PC-3 (cell line): ENCODE measurements at regions of chr3 and their contacts with region 1.

Region 1: DNA sequence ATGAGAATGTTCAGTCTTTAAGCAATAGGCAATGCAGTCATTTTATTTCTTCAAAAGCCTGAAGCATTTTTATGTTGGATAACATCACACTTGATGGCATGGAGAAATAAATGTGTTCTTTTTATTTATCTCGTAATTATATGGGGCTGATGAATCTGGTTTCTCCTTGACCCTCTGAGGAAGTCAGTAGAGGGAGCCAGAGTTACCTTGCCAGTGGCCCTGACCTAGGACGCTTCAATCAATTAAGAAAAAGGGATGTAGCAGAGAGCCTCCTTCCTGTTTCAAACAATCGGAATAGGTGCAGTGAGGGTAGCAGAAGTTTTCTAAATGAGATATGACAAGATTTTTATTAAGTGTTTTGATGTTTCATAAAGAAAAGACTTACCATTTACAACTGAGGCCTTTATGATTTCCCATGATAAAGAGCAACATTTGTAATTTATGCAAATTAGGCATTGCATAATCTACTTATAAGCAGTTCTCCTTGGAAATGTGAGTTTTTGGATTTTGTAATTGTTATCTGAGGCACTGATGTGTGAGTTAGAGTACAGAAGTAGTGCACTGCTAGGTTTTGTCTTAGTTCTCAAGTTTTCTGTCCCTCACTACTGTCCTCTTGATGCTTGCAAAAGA is 129.1 kb downstream of the RAP2B start:
- DNase-seq: peak; percentile 69
- ATAC-seq: peak; percentile 80
- H3K4me3 ChIP-seq: no peak overlapping the region
- H3K27ac ChIP-seq: no peak overlapping the region
- H3K4me1 ChIP-seq: peaks cover 33% of the 10 kb centered on the region
- H3K27me3 ChIP-seq: no peaks in the 10 kb centered on the region
- CTCF ChIP-seq: peak; percentile 85

Region 2: GRCh38 chr3:153103406-153103945 is 187.7 kb before region 1 on chr3:
- CTCF ChIA-PET with region 1: no interaction called
- POLR2A ChIA-PET with region 1: interaction called, 11 read pairs
- intact Hi-C with region 1: no loop called
- DNase-seq: no peak
- ATAC-seq: no peak
- H3K4me3 ChIP-seq: no peak overlapping the region
- H3K27ac ChIP-seq: no peak overlapping the region
- H3K4me1 ChIP-seq: no peaks in the 10 kb centered on the region
- H3K27me3 ChIP-seq: no peaks in the 10 kb centered on the region
- CTCF ChIP-seq: no peak

Region 3: DNA sequence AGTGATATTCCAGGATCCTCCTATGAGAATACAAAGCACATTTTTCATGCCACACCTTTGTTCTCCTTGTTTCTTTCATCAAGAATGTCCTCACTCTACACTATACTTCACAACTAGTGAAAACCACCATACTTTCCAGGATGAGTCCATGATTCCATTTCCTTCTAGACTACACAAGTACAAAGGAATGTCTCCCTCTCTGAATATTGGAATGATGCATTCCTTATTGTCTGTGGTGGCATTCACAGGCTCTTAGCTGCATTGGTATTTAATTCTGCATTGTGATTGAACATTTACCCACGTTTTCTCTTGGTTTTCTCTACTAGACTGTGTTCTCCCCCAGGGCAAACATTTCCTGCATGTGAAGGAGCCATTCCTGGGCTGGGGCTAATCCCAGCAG is 88.3 kb after region 1 on chr3:
- CTCF ChIA-PET with region 1: no interaction called
- POLR2A ChIA-PET with region 1: no interaction called
- intact Hi-C with region 1: no loop called
- DNase-seq: peak; percentile 12
- ATAC-seq: no peak
- H3K4me3 ChIP-seq: no peak overlapping the region
- H3K27ac ChIP-seq: no peak overlapping the region
- H3K4me1 ChIP-seq: no peaks in the 10 kb centered on the region
- H3K27me3 ChIP-seq: no peaks in the 10 kb centered on the region
- CTCF ChIP-seq: no peak

Region 4: GRCh38 chr3:153443961-153444360 is 152.8 kb after region 1 on chr3:
- CTCF ChIA-PET with region 1: no interaction called
- POLR2A ChIA-PET with region 1: no interaction called
- intact Hi-C with region 1: loop called (anchors 1 kb)
- DNase-seq: peak; percentile 65
- ATAC-seq: no peak
- H3K4me3 ChIP-seq: no peak overlapping the region
- H3K27ac ChIP-seq: no peak overlapping the region
- H3K4me1 ChIP-seq: no peaks in the 10 kb centered on the region
- H3K27me3 ChIP-seq: no peaks in the 10 kb centered on the region
- CTCF ChIP-seq: peak; percentile 72